ENCODE measurements at regions of chr3 and their contacts with region 1.

Region 1: GRCh38 chr3:128322066-128323022 is 144.3 kb downstream of the DNAJB8 start:
- DNase-seq: no peak
- H3K4me3 ChIP-seq: no peak overlapping the region
- H3K27ac ChIP-seq: no peak overlapping the region
- H3K4me1 ChIP-seq: peaks cover under 1% of the 10 kb centered on the region
- H3K27me3 ChIP-seq: no peaks in the 10 kb centered on the region
- CTCF ChIP-seq: peak in 3 of 4 experiments; percentile 23 to 51 (median 29)
- POLR2A ChIP-seq: no peak

Region 2: GRCh38 chr3:128112357-128112968 is 209.9 kb before region 1 on chr3:
- intact Hi-C with region 1: no loop called
- DNase-seq: no peak
- H3K4me3 ChIP-seq: no peak overlapping the region
- H3K27ac ChIP-seq: no peak overlapping the region
- H3K4me1 ChIP-seq: no peaks in the 10 kb centered on the region
- H3K27me3 ChIP-seq: no peaks in the 10 kb centered on the region
- CTCF ChIP-seq: peak in 1 of 4 experiments; percentile 9
- POLR2A ChIP-seq: no peak

Region 3: DNA sequence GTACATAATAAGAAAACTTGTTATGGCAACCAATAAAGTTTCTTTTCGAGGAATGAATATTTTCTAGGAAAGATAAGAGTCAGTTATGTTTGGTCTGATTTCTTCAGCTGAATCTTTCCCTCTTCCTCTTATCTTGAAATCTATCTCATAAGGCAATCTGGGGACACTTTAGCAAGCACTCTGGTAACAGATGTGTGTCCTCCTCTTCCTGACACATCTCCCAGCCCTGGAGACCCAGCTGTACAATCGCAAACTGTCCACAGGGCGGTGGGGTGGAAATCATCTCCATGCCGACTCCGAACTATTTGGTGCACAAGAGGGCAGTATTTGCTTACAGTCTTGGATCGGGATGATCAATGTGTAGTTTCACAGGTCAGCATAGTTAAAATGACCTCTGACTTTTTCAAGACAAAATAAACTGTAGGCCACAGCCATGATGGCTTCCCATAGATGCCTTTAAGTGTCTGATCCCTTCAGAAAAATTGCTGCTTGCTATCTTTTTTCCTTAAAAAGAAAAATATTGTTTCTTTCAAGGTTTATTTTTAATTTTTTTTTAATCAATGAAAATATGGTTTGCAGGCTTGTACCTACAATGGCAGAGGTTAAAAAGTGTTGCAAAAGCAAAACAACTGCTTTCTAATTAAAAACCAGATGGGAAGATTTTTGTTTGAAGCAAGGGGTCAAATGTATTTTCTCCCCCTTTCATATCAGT is 151.4 kb before region 1 on chr3:
- intact Hi-C with region 1: loop called (anchors 5 kb)
- DNase-seq: peak; percentile 60
- H3K4me3 ChIP-seq: no peak overlapping the region
- H3K27ac ChIP-seq: no peak overlapping the region
- H3K4me1 ChIP-seq: no peaks in the 10 kb centered on the region
- H3K27me3 ChIP-seq: no peaks in the 10 kb centered on the region
- CTCF ChIP-seq: peak; percentile 34 to 89 (median 71)
- POLR2A ChIP-seq: no peak

Measured in prostate gland (tissue), 2 donors.